GM10248 (cell line): ENCODE measurements at regions of chr11 and their contacts with region 1.

Region 1: DNA sequence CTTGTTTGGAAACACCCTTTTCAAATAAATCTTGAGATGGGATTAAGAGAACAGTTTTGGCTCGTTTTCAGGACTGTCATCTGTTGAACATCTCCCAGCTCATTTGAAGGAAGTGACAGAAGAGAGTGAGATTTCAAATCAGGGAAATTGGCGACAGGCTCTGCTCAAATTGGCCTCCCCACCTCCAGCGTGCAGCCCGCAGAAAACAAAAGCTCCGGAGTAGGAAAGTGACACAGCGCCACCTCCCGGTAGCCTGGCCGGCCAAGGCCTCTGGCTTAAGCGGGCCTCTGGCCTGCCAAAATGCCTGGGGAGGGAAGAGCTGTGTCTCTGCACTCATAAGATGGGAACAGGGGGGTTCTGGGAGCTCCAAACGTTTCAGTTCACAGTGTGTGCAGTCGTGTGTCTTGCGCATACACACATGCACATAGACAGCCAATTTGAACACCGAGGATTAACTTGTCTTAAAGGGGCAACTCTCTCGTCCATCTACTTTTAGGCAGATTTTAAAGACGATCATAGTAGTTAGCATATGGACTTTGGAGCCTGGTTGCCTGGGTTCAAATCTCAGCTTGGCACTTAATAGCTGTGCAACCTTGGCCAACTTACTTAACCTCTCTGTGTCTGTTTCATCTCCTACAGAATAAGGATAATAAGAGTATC is 132.7 kb upstream of the RCN1 start:
- DNase-seq: peak; percentile 77
- CTCF ChIP-seq: peak; percentile 89

Region 2: DNA sequence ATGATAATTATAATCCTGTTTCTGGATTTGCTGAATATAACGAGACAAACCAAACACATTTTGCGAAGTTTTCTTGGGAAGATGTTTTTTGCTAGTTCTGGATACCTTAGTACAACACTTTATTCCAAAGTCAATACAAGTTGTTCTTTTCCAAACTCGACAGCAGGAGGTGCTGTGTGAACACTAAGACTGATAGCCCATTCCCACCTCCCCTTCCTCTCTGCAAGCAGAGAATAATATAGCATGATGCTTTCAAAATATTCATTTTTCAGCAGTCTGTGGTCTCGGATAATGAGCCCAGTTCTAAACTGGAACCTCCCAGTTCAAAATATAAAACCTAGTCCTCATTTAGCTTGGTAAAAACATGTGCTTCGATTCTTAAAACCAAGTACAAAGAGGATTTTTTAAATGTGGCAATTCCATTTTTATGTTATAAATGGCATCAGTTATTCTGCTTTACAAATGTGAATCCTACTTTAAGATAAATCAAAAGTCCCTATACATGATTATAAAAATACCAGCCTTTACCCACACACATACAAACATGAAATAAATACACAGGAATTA is 717.8 kb before region 1 on chr11:
- CTCF ChIA-PET with region 1: interaction called, 13 read pairs
- POLR2A ChIA-PET with region 1: no interaction called
- DNase-seq: no peak
- CTCF ChIP-seq: peak; percentile 38

Region 3: GRCh38 chr11:31640611-31641010 is 317.6 kb before region 1 on chr11:
- CTCF ChIA-PET with region 1: interaction called, 13 read pairs
- POLR2A ChIA-PET with region 1: no interaction called
- DNase-seq: no peak
- CTCF ChIP-seq: no peak

Region 4: GRCh38 chr11:31798554-31799434 is 159.4 kb before region 1 on chr11:
- CTCF ChIA-PET with region 1: no interaction called
- POLR2A ChIA-PET with region 1: no interaction called
- DNase-seq: peak; percentile 64
- CTCF ChIP-seq: peak; percentile 47

Region 5: DNA sequence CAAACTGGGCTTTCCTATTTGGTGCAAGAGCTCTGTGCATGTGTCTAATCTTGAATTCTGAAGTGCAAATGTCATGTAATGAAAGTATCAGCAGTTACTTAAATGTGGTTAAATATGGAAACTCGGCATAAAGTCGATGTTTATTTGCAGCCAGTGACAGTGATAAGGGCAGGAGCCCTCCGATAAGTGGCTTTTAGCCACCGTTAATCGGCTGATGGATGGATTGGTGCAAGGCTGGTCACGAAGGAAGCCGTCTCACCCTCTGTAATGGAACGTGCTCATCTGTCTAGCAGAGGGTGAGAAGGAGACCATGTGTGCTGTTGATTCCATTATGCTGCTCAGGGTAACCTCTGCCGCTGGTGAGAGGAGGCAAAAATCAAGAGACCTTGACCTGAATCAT is 25.3 kb before region 1 on chr11:
- CTCF ChIA-PET with region 1: interaction called, 11 read pairs
- POLR2A ChIA-PET with region 1: no interaction called
- DNase-seq: no peak
- CTCF ChIP-seq: no peak

Region 6: GRCh38 chr11:31974366-31975136 is 16.3 kb after region 1 on chr11:
- CTCF ChIA-PET with region 1: interaction called, 49 read pairs
- POLR2A ChIA-PET with region 1: no interaction called
- DNase-seq: no peak
- CTCF ChIP-seq: no peak

Region 7: DNA sequence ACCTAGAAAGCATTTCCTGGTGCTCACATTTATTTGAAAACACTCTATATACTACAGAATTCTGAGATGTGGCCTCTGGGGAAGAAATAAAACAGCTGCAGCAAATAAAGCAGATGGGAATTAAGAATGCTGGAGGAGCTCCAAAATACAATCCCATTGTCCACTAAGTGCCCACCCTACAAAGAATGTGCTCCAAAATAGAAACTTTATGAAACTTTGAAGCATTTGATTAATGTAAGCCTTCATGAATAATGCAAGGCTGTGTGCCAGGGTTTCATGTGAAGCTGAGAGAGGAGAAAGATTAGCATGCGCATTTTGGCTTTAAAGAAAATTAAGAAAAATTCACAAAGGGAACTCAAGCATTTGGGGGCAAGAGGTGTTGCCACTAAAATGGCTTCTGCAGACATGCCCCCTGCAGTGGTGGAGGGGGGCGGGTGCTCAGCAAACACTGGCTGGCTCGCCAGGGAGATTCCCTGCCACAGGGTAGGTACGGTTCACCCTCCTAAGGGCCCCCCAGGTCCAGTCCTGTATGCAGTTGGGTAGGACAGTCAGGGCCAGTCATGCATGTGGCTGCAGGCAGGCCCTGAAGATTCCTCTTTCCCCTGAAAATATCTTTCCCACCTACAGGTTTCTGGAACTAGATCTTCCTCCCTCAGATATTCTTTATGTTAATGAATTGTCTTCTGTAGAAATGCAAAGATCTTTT is 86.1 kb after region 1 on chr11:
- CTCF ChIA-PET with region 1: no interaction called
- POLR2A ChIA-PET with region 1: no interaction called
- DNase-seq: no peak
- CTCF ChIP-seq: no peak